PC-9 (cell line): ENCODE measurements at regions of chr5 and their contacts with region 1.

Region 1: DNA sequence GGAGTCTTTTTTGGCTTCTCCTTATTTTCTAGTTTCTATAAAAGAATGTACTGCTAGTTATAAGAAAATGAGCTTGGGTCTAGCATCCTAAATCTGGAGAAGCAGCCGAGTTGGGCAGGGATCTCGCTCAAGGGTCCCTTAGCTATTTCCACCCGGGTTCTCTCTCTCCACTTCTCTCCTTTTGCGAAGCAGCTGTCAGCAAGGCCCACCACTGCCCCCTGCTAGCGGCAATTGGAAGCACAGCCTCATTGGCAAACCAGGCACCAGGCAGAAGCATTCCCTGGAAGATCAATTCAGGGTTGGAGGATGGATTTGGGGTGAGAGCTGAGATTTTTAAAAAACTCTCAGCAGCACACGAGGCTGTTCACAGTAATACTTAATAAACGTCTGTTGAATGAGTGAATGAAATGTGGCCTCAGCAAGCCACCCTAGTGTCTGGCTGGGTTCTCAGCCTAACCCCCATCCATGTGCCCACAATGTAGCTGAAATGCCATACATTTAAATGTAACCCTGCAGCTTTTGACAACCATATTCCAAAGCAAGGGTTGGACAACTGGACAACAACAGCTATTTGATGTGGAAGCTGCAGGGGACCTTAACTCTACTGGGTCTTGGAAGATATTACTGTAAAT is 34.6 kb upstream of the TNIP1 start:
- DNase-seq: peak; percentile 50 to 76
- H3K4me3 ChIP-seq: no peak overlapping the region
- H3K27ac ChIP-seq: no peak overlapping the region
- H3K4me1 ChIP-seq: no peaks in the 10 kb centered on the region; the same call in 1 of the 2 replicates
- H3K27me3 ChIP-seq: no peaks in the 10 kb centered on the region
- CTCF ChIP-seq: peak; percentile 99

Region 2: DNA sequence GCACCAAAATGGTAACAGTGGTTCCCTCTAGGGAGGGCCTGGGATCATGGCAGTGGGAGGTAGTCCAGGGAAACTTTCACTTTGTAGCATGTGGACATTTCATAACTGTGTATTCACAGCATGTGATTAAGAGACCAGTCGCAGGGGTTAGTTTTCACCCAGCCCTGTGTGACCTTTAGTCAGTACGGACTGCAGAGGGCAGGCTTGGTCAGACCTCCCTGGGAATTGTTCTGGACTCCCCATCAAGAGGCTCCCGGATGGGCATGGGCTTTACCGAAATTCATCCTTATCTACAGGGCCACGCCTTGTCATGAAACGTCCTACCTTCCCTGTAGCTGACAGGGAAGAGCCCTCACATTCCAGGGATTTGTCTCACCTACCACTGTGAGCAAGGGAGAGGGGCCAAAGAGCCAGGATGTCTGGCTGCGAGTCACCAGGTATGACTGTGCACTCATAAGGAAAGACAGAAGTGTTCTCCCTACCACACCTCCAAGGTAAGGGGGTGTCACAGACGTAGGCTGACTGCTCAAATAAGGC is 75.1 kb before region 1 on chr5:
- CTCF ChIA-PET with region 1: interaction called, 16 read pairs
- POLR2A ChIA-PET with region 1: no interaction called
- intact Hi-C with region 1: no loop called
- DNase-seq: peak; percentile 63 to 85
- H3K4me3 ChIP-seq: no peak overlapping the region
- H3K27ac ChIP-seq: peak overlapping the region; percentile 89
- H3K4me1 ChIP-seq: peaks cover 47% of the 10 kb centered on the region
- H3K27me3 ChIP-seq: no peaks in the 10 kb centered on the region
- CTCF ChIP-seq: no peak

Region 3: GRCh38 chr5:151051066-151051930 is 64.1 kb before region 1 on chr5:
- CTCF ChIA-PET with region 1: interaction called, 48 read pairs
- POLR2A ChIA-PET with region 1: interaction called, 5 read pairs
- intact Hi-C with region 1: loop called (anchors 1 kb)
- DNase-seq: peak; percentile 59 to 65
- H3K4me3 ChIP-seq: no peak overlapping the region
- H3K27ac ChIP-seq: no peak overlapping the region
- H3K4me1 ChIP-seq: peaks cover 25% of the 10 kb centered on the region
- H3K27me3 ChIP-seq: no peaks in the 10 kb centered on the region
- CTCF ChIP-seq: peak; percentile 92

Region 4: DNA sequence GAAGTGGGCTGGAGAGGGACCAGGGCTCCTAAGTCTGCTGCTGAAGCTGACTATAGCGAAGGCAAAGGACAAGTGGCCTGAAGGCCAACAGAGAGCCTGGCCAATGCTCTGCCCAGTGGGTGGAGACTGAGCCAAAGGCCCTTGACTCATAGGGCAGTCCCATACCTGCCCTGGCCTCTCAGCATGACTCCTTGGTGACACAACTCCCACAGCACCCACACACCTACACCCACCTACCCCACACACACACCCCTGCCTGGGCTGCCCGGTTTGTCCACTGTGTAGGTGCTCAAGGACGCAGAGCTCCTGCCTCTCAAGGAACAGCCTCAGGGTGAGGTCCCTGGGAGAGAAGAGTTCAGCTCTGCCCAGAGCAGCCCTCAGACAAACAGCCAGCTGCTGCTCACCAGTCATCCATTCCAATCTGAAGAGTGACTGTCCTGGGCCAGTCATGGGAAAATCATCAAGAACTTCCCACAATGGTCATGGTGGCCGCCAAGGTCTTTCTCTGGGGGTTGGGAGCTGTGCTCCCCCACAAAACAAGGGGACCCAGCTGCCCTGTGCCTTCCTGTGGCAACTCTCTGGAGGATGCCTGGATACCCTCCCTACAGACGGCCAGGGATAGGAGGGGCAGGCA is 39.6 kb before region 1 on chr5:
- CTCF ChIA-PET with region 1: interaction called, 16 read pairs
- POLR2A ChIA-PET with region 1: no interaction called
- intact Hi-C with region 1: loop called (anchors 1 kb)
- DNase-seq: peak; percentile 98 to 99
- H3K4me3 ChIP-seq: peak overlapping the region; percentile 15; the same call in 1 of the 2 replicates
- H3K27ac ChIP-seq: peak overlapping the region; percentile 94
- H3K4me1 ChIP-seq: peaks cover 82% of the 10 kb centered on the region
- H3K27me3 ChIP-seq: no peaks in the 10 kb centered on the region
- CTCF ChIP-seq: no peak

Region 5: DNA sequence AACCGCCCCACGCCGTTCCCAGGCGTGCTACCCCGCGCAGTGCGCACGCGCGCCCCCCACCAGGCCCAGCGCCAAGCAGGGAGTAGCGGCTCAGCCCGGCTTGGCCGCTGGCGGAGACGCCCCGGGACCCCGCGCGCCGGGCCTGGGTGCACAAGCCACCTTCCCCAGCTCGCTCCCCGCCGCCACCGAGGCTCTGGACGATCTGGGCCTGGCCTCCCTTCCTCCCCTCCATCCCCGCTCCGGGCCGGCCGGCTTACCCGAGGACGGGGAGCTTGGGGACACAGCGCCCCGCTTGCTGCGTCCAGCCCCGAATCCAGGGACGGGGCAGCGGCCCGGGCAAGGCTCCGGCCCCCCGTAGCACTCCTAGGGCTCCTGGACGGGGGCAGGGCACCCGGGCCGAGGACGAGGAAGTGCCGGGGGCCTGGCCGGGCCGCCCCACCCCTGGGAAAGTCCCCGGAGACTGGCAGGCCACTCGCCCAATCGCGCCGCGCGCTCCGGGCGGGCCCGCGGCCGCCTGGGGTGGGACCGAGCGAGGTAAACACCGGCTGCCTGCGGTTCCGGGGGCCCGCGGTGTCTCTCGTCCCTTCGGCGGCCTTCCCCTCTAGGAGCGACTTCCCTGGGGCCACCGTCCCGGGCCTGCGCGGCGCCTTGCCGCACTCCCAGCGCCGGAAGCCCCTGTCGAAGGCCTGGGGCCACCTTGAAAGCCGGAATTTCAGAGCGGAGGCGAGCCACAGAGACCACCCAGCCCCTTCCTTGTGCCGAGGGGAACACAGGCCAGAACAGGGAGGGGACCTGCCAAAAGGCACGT is 34.6 kb before region 1 on chr5 and contains the start of gene TNIP1:
- CTCF ChIA-PET with region 1: interaction called, 17 read pairs
- POLR2A ChIA-PET with region 1: interaction called, 3 read pairs
- intact Hi-C with region 1: loop called (anchors 1 kb)
- DNase-seq: peak; percentile 78 to 98
- H3K4me3 ChIP-seq: peak within 1 kb of the TSS; percentile 75
- H3K27ac ChIP-seq: peak within 1 kb of the TSS; percentile 81
- H3K4me1 ChIP-seq: peaks cover 80% of the 10 kb centered on the region
- H3K27me3 ChIP-seq: no peaks in the 10 kb centered on the region
- CTCF ChIP-seq: no peak
- total RNA-seq, gene TNIP1: 122 and 124 TPM in 2 replicates